CD4-positive, alpha-beta memory T cell (primary cell): ENCODE measurements at regions of chr11 and their contacts with region 1.

Region 1: GRCh38 chr11:15697437-15698236 is 582.9 kb downstream of the INSC start:
- DNase-seq: no peak
- H3K4me3 ChIP-seq: no peak overlapping the region
- H3K4me3 Mint-ChIP-seq: no peak overlapping the region
- H3K27ac ChIP-seq: no peak overlapping the region
- H3K27ac Mint-ChIP-seq: no peak overlapping the region
- H3K4me1 ChIP-seq: no peaks in the 10 kb centered on the region
- H3K4me1 Mint-ChIP-seq: no peaks in the 10 kb centered on the region
- H3K27me3 ChIP-seq: no peaks in the 10 kb centered on the region
- H3K27me3 Mint-ChIP-seq: no peaks in the 10 kb centered on the region

Region 2: DNA sequence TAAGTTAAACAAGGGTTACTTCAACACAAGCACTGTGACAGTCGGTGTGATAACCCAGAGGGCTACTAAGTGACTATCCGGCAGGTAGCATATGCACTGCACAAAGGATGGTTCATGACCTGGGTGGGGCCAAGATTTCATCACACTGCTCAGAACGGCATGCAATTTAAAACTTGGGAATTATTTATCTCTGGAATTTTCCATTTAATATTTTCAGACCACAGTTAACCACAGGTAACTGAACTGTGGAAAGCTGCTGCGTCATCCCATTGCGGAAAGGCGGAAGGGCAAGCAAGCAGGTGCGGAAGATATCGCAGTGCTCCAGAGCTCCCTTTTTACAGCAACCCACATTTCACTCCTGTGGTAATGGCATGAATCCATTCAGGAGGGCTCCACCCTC is 42.1 kb before region 1 on chr11:
- CTCF ChIA-PET with region 1: no interaction called
- POLR2A ChIA-PET with region 1: no interaction called
- intact Hi-C with region 1: loop called (anchors 2 kb)
- DNase-seq: no peak
- H3K4me3 ChIP-seq: no peak overlapping the region
- H3K4me3 Mint-ChIP-seq: no peak overlapping the region
- H3K27ac ChIP-seq: no peak overlapping the region
- H3K27ac Mint-ChIP-seq: no peak overlapping the region
- H3K4me1 ChIP-seq: peaks cover 4% of the 10 kb centered on the region
- H3K4me1 Mint-ChIP-seq: peaks cover 0 to 11% (median 1%) of the 10 kb centered on the region in 4 donors
- H3K27me3 ChIP-seq: peaks cover 5% of the 10 kb centered on the region
- H3K27me3 Mint-ChIP-seq: peaks cover 4 to 10% of the 10 kb centered on the region in 2 donors